ENCODE measurements at regions of chr6 and their contacts with region 1.

Region 1: GRCh38 chr6:85449818-85450759 is at the start of gene NT5E:
- DNase-seq: peak; percentile 79
- H3K4me3 ChIP-seq: peak within 1 kb of the TSS; percentile 61 to 86 (median 69)
- H3K27ac ChIP-seq: peak within 1 kb of the TSS; percentile 84
- H3K4me1 ChIP-seq: peaks cover 23% of the 10 kb centered on the region
- H3K27me3 ChIP-seq: no peaks in the 10 kb centered on the region
- CTCF ChIP-seq: peak in 1 of 2 donors; percentile 1
- POLR2A ChIP-seq: peak; percentile 72
- total RNA-seq, gene NT5E: 48.2 and 115 TPM in 2 replicates

Region 2: DNA sequence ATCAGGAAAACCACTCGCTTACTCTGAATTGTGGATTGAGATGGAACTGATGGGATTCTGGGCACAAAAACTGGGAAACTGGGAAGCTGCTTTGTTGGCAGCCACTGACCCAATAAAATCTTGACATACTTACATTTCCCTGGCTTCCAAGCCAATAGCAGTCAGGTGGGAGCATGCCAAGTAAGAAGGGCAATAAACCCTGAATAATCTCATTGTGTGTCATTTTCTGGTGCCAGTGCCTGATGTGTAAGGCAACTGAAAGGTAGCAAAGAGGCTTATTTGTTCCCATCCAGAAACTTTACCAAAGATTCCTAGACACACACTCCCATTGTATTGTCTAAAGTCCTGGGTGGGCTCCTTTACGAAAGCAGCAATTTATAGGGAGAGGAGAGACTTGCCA is 778.9 kb before region 1 on chr6:
- CTCF ChIA-PET with region 1: no interaction called
- POLR2A ChIA-PET with region 1: no interaction called
- dilution Hi-C with region 1: no loop called
- intact Hi-C with region 1: no loop called
- DNase-seq: no peak
- H3K4me3 ChIP-seq: no peak overlapping the region
- H3K27ac ChIP-seq: no peak overlapping the region
- H3K4me1 ChIP-seq: peaks cover 17% of the 10 kb centered on the region
- H3K27me3 ChIP-seq: no peaks in the 10 kb centered on the region
- CTCF ChIP-seq: no peak
- POLR2A ChIP-seq: no peak

Region 3: DNA sequence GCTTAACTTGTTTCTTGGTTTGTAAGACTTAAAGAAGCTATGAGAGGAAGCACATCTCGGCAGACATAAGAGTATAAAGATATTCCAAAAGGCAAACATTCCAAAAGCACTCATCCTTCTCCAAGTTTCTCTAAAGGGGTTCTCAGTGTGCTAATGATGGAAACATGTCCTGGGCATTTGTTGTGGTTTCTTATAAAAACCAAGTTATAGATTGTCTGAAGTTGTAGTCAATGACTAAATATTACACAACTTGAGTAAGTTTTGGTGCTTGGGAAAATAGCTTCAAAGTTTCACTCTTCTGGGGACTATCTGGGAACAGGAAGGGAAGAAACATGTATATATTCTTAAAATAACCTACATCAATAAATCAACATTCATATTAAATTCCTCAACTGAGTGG is 557.4 kb before region 1 on chr6:
- CTCF ChIA-PET with region 1: no interaction called
- POLR2A ChIA-PET with region 1: no interaction called
- dilution Hi-C with region 1: no loop called
- intact Hi-C with region 1: no loop called
- DNase-seq: no peak
- H3K4me3 ChIP-seq: no peak overlapping the region
- H3K27ac ChIP-seq: no peak overlapping the region
- H3K4me1 ChIP-seq: peaks cover 8% of the 10 kb centered on the region
- H3K27me3 ChIP-seq: no peaks in the 10 kb centered on the region
- CTCF ChIP-seq: no peak
- POLR2A ChIP-seq: no peak

Region 4: DNA sequence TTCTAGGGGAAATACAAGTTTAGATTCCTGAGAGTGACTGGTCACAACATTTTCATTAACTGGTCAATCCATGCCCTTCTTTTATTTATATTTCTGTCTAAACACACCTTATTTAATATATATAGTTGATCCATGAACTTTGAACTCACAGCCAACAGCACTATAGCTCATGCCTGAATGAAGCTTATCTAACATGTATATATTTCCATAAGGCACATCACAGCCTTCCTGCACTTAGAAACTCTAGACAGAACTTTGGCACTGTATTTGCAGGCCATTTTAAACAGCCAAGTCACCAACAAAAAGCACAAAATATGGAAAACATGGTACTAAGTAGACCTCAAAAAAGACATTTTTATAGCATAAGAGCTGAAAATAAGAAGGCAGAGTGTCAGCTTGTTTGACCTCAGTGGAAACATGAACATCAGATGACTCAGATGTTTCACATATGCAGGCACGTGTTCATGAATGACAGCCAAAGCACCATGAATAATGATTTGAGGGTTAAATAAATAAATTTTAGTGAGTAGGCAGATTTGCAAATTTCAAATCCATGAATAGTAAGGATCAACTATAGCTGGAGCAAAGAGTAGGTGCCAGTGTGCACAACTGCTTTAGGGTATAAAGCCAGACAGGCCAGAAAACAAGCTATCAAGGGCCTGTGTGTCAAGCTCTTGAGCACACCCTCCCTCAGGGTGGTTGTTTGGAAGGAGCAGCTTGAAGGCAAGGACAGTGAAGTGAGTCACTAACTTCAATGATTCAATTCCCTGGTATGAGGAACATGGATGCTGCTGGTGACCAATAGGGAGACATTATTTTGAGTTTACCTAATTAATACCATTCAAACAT is 89.1 kb before region 1 on chr6:
- CTCF ChIA-PET with region 1: interaction called, 63 read pairs
- POLR2A ChIA-PET with region 1: interaction called, 10 read pairs
- dilution Hi-C with region 1: loop called (anchors 25 kb)
- intact Hi-C with region 1: no loop called
- DNase-seq: peak; percentile 70
- H3K4me3 ChIP-seq: no peak overlapping the region
- H3K27ac ChIP-seq: peak overlapping the region; percentile 70
- H3K4me1 ChIP-seq: peaks cover 30% of the 10 kb centered on the region
- H3K27me3 ChIP-seq: no peaks in the 10 kb centered on the region
- CTCF ChIP-seq: no peak
- POLR2A ChIP-seq: no peak

Region 5: GRCh38 chr6:85498596-85499258 is 48.6 kb after region 1 on chr6:
- CTCF ChIA-PET with region 1: interaction called, 10 read pairs
- POLR2A ChIA-PET with region 1: no interaction called
- dilution Hi-C with region 1: no loop called
- intact Hi-C with region 1: no loop called
- DNase-seq: peak; percentile 43
- H3K4me3 ChIP-seq: no peak overlapping the region
- H3K27ac ChIP-seq: no peak overlapping the region
- H3K4me1 ChIP-seq: peaks cover 7% of the 10 kb centered on the region
- H3K27me3 ChIP-seq: no peaks in the 10 kb centered on the region
- CTCF ChIP-seq: no peak
- POLR2A ChIP-seq: no peak

Region 6: DNA sequence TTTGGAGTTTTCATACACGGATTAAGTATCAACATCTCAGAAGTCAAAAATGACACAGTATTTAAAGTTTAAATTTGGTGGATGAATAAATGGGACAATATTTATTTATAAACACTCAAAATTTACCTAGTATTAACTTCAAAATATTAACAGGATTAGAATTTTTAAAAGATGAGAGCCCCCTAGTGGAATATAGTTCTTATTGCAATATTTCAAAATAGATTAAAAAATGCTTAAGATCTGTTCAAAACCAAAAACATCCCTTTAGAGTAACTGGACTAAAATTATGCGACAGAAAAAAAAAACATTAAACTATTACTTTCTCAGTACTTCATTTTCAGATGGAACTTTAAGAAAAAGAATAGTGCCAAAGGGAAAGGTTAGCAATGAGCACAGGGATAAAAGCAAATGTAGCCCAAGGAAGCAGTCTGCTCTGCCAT is 87.0 kb after region 1 on chr6:
- CTCF ChIA-PET with region 1: interaction called, 32 read pairs
- POLR2A ChIA-PET with region 1: no interaction called
- dilution Hi-C with region 1: no loop called
- intact Hi-C with region 1: no loop called
- DNase-seq: peak; percentile 32
- H3K4me3 ChIP-seq: no peak overlapping the region
- H3K27ac ChIP-seq: no peak overlapping the region
- H3K4me1 ChIP-seq: no peaks in the 10 kb centered on the region
- H3K27me3 ChIP-seq: no peaks in the 10 kb centered on the region
- CTCF ChIP-seq: peak in 1 of 2 donors; percentile 34
- POLR2A ChIP-seq: no peak

Measured in endothelial cell of umbilical vein (primary cell).